A549 (cell line): ENCODE measurements at regions of chr1 and their contacts with region 1.

Region 1: GRCh38 chr1:224205438-224205840 is 22.4 kb downstream of the DEGS1 start:
- DNase-seq: peak in 1 of 2 experiments; percentile 28
- ATAC-seq: peak; percentile 64 to 65; a peak in 5 of 6 replicates
- H3K4me3 ChIP-seq: no peak overlapping the region
- H3K27ac ChIP-seq: peak overlapping the region; percentile 47 to 73; a peak in 4 of 6 replicates
- H3K4me1 ChIP-seq: peaks cover 22% of the 10 kb centered on the region
- CTCF ChIP-seq: no peak
- EP300 ChIP-seq: no peak
- POLR2A ChIP-seq: no peak
- RAD21 ChIP-seq: no peak

Region 2: GRCh38 chr1:224235813-224236493 is 30.5 kb after region 1 on chr1:
- CTCF ChIA-PET with region 1: no interaction called
- POLR2A ChIA-PET with region 1: interaction called, 11 read pairs
- DNase-seq: no peak
- ATAC-seq: no peak
- H3K4me3 ChIP-seq: no peak overlapping the region
- H3K27ac ChIP-seq: no peak overlapping the region
- H3K4me1 ChIP-seq: no peaks in the 10 kb centered on the region
- CTCF ChIP-seq: no peak
- EP300 ChIP-seq: no peak
- POLR2A ChIP-seq: no peak
- RAD21 ChIP-seq: no peak